PC-3 (cell line): ENCODE measurements at regions of chr14 and their contacts with region 1.

Region 1: DNA sequence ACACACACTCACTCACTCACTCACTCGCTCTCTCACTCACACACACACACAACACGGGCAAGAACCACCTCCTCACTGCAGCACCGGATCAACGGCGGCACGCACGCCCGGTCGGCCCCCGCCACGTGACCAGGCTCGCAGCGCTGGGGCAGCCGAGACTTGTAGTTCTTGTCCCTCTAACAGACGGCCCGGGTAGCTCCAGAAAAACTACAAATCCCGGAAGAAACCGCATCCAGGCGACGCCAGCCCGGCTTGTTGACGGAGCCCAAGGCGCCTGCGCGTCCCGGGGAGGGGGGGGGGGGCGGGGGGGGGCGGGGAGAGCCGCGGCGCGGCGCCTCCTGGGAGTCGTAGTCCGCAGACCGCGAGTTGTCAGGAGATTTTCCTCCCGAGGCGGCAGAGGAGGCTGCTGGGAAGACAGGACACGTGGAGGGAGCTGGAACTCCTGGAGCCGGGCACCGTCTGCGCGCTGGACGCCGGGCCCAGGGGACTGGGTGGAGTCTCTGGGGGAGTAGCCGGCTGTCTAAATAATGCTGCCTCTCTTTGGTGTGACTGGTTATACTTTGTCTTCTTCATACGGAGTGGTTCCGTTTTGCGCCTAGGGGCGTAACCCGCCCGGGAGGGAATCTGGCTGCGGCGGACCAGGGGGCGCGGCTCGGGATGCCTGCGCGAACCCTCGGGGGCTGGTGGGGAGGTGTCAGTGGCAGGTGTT is at the start of gene MAX:
- DNase-seq: peak; percentile 98
- ATAC-seq: peak; percentile 90
- H3K4me3 ChIP-seq: peak within 1 kb of the TSS; percentile 89
- H3K27ac ChIP-seq: peak within 1 kb of the TSS; percentile 57
- H3K4me1 ChIP-seq: peaks cover 21% of the 10 kb centered on the region
- H3K27me3 ChIP-seq: no peaks in the 10 kb centered on the region
- CTCF ChIP-seq: no peak
- total RNA-seq, gene MAX: 58.8 and 68.9 TPM in 2 replicates

Region 2: GRCh38 chr14:65131301-65131701 is 28.7 kb after region 1 on chr14:
- CTCF ChIA-PET with region 1: no interaction called
- POLR2A ChIA-PET with region 1: no interaction called
- intact Hi-C with region 1: loop called (anchors 2 kb)
- DNase-seq: peak; percentile 77
- ATAC-seq: peak; percentile 97
- H3K4me3 ChIP-seq: no peak overlapping the region
- H3K27ac ChIP-seq: peak overlapping the region; percentile 4; the same call in 1 of the 2 replicates
- H3K4me1 ChIP-seq: peaks cover 10% of the 10 kb centered on the region
- H3K27me3 ChIP-seq: no peaks in the 10 kb centered on the region
- CTCF ChIP-seq: no peak

Region 3: GRCh38 chr14:65179918-65180724 is 77.5 kb after region 1 on chr14:
- CTCF ChIA-PET with region 1: no interaction called
- POLR2A ChIA-PET with region 1: no interaction called
- intact Hi-C with region 1: no loop called
- DNase-seq: peak; percentile 90
- ATAC-seq: peak; percentile 87
- H3K4me3 ChIP-seq: no peak overlapping the region
- H3K27ac ChIP-seq: peak overlapping the region; percentile 71
- H3K4me1 ChIP-seq: peaks cover 26% of the 10 kb centered on the region
- H3K27me3 ChIP-seq: no peaks in the 10 kb centered on the region
- CTCF ChIP-seq: no peak

Region 4: GRCh38 chr14:65373679-65374039 is 271.1 kb after region 1 on chr14:
- CTCF ChIA-PET with region 1: no interaction called
- POLR2A ChIA-PET with region 1: no interaction called
- intact Hi-C with region 1: no loop called
- DNase-seq: peak; percentile 29
- ATAC-seq: peak; percentile 75
- H3K4me3 ChIP-seq: peak overlapping the region; percentile 58
- H3K27ac ChIP-seq: 0 out of 2 replicates have a peak overlapping the region, but pooled peaks have one; percentile 0
- H3K4me1 ChIP-seq: no peaks in the 10 kb centered on the region
- H3K27me3 ChIP-seq: no peaks in the 10 kb centered on the region
- CTCF ChIP-seq: peak; percentile 28; the same call in 1 of the 2 replicates

Region 5: GRCh38 chr14:65487783-65488494 is 385.3 kb after region 1 on chr14:
- CTCF ChIA-PET with region 1: no interaction called
- POLR2A ChIA-PET with region 1: interaction called, 12 read pairs
- intact Hi-C with region 1: no loop called
- DNase-seq: no peak
- ATAC-seq: no peak
- H3K4me3 ChIP-seq: no peak overlapping the region
- H3K27ac ChIP-seq: no peak overlapping the region
- H3K4me1 ChIP-seq: peaks cover 11% of the 10 kb centered on the region
- H3K27me3 ChIP-seq: no peaks in the 10 kb centered on the region
- CTCF ChIP-seq: no peak